GM10248 (cell line): ENCODE measurements at regions of chr7 and their contacts with region 1.

Region 1: DNA sequence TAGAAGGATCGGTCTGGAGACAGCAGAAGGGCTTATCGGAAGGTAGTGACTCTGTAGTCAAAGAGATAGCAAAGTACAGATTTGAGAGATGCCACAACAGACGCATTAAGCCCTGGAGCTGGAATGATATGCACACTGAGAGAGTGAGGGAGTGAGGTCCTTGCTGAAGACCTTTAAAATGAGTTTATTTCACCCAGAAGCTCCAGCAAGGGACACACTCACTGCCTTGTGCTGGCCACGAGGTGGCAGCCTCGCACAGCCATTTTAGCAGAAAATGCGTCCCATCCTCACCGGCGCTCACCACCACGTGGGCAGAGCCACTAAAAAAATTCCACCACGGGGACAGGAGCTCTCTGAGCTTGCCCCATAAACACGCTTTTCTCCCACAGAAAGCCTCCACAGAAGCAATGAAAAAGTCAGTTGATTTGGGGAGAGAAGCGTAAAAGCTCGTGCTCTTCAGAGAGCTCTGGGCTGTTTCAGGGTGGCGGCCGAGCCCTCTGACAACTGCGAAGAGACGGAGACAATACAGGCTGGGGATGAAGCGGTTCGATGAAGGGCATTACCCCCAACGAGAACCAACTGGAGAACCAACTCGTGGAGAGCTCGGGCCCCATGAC is 163.0 kb upstream of the KLF14 start:
- DNase-seq: peak; percentile 75
- CTCF ChIP-seq: peak; percentile 82

Region 2: DNA sequence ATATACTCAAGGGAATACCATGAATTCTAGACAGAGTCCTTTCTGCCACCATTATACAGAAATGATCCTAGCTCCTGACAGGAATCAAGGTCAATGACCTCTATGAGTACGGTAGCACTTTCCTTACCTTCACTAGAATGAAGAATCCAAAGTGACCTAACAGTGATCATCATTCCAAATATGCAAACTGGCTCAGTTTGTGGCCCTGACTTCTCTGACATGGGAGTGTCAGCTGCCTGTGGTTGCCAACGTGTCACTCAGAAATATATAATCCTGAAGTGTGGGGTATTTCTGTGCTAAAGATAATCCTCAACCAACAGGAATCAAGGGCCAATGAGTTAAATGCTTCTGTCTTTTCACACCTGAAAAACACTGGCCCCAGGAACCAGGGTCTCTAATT is 274.1 kb before region 1 on chr7:
- CTCF ChIA-PET with region 1: no interaction called
- POLR2A ChIA-PET with region 1: no interaction called
- DNase-seq: no peak
- CTCF ChIP-seq: no peak

Region 3: DNA sequence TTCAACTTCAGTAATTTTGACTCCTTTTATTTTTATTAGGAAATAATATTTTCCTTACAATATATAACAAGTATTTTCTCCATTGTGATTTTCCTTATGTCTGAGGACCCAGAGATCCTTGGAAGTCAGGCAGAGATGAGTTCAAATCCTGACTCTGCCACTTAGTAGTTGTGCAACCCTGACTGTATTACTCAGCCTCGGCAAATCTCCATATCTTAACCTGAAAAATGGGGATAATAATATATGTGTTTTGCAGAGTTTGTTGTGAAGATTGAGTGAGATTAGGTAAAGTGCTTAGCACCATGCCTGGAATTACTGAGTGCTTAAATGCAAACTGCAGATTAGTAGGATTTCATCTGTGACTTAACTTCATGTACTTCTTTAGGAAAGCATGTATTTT is 42.5 kb before region 1 on chr7:
- CTCF ChIA-PET with region 1: interaction called, 12 read pairs
- POLR2A ChIA-PET with region 1: no interaction called
- DNase-seq: no peak
- CTCF ChIP-seq: no peak

Region 4: DNA sequence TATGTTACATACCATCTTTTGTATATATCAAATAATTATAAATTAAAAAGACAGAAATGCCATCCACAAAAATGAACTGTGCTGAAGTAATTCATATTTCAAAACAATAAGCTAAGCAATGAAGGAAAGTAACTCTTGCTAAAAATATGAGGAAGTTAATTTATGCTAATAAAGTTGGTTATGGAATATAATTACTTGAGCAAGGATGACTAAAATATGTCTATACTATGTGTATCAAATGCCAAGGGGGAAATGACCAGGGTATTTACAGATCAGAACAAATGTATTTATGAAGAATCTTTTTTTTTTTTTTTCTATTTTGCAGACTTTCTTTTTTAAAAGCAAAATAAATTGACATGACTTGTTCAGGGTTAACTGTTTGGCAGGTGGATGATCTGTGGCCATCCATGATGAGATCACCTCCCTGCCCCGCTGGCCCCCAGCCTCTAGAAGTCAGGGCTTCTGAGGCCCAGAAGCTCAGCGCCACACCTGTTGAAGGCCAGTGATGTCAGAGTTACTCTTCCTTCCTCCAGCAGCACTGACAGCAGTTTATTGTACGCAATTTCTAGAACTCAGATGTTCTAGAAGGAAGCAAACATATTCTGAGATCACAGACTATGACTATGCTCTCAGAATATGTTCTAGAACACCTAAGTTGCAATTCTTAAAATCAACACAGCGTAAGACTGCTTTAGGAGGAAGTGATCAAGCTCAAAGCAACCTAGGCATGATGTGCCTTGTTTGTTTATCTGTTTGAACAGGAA is 33.1 kb after region 1 on chr7:
- CTCF ChIA-PET with region 1: interaction called, 26 read pairs
- POLR2A ChIA-PET with region 1: no interaction called
- DNase-seq: no peak
- CTCF ChIP-seq: no peak

Region 5: DNA sequence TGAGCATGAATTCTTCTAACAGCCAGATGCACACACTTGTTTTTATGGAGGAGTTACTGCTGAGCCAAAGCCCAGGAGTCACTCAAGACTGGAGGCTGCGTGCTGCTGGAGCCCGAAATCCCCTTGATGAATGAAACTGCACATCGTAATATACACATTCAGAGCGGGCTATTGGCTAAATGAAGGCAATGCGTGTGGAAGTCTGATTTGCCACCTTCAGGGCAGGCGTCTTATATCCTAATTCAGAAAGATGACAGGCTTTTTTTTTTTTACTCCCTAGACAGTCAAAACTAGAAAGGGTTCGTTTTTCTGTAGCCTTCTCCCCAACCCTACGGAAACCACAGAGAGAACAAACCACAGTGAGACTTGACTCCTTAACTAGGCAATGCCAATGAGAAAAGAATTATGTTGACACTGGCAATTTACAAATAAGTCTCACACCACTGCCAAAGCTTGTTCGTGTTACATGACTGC is 64.2 kb after region 1 on chr7:
- CTCF ChIA-PET with region 1: interaction called, 34 read pairs
- POLR2A ChIA-PET with region 1: no interaction called
- DNase-seq: peak; percentile 73
- CTCF ChIP-seq: no peak

Region 6: DNA sequence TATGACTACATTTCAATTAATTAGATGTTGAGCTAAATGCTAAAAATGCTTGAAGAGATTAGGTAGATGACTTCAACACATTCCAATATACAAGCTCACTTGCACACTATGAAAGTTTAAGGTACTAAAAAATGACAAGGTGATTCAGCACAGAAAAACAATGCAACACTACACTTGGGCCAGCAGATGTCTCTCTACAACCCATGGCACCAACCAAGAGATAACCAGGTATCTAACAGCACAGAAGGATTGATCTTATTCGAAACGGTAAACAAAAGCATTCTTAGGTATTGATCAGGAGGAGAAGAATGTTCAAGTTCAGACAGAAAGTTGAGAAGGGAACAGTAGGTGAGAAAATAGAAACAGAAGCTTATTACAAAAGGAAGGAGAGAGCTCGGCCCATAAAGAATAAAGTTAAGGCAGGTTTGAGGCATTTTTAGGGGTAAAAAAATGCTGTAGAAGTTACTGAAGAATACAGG is 85.2 kb after region 1 on chr7:
- CTCF ChIA-PET with region 1: interaction called, 17 read pairs
- POLR2A ChIA-PET with region 1: no interaction called
- DNase-seq: peak; percentile 50
- CTCF ChIP-seq: peak; percentile 59

Region 7: DNA sequence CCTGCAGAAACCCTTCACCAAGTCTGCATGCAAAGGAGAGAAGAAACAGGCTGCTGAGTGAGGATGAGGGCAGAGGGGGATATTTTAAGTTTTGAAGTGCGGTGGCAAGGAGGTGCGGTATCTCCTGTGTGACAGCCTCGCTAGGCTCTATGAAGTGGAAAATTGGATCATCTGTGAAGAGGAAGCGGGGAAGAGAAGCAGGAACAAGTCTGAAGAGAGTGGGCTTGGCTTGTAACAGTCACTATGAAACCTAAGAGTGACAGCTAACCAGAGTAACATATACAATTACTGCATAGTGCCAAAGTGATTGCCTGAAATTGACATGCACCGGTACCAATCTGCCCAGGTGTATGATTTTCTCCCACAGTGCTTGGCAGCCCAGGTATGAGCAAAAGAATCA is 124.5 kb after region 1 on chr7:
- CTCF ChIA-PET with region 1: interaction called, 11 read pairs
- POLR2A ChIA-PET with region 1: no interaction called
- DNase-seq: peak; percentile 30
- CTCF ChIP-seq: no peak

Region 8: GRCh38 chr7:131501422-131501821 is 604.4 kb after region 1 on chr7:
- CTCF ChIA-PET with region 1: interaction called, 12 read pairs
- POLR2A ChIA-PET with region 1: no interaction called
- DNase-seq: no peak
- CTCF ChIP-seq: no peak